ENCODE measurements at regions of chr16 and their contacts with region 1.

Region 1: DNA sequence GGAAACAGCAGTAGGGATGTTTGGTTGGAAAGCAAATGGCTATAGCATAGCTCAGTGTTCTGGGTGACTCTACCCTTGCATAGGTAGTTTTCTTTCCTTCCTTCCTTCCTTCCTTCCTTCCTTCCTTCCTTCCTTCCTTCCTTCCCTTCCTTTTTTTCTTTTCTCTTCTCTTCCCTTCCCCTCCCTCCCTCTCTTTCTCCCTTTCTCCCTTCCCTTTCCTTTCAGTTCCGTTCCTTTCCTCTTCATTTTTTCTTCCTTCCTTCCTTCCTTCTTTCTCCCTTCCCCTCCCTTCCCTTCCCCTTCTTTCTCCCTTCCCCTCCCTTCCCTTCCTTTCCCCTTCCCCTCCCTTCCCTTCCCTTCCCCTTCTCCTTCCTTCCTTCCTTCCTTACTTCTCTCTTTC is 31.3 kb downstream of the GDE1 start:
- DNase-seq: no peak
- ATAC-seq: no peak
- H3K4me3 ChIP-seq: no peak overlapping the region
- H3K27ac ChIP-seq: no peak overlapping the region
- H3K4me1 ChIP-seq: no peaks in the 10 kb centered on the region
- H3K27me3 ChIP-seq: no peaks in the 10 kb centered on the region
- CTCF ChIP-seq: no peak

Region 2: DNA sequence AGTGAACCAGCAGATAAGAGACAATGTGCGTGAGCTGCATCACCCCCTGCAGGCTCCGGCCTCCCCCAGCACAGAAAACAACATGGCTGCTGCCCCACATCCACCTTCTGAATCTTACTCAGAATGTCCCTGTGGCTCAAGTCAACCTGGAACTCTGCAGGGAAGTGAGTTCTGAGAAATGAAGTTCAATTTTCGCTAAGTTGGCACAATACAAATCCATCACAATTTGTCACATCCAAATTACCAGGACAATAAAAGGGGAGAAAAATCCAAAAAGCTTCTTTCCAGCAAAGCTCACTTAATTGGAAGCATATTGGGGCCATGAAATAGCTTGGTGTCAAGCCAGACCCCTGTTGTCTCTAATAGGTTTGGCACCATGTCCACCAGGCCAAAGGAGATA is 167.0 kb before region 1 on chr16:
- intact Hi-C with region 1: no loop called
- DNase-seq: no peak
- ATAC-seq: no peak
- H3K4me3 ChIP-seq: no peak overlapping the region
- H3K27ac ChIP-seq: no peak overlapping the region
- H3K4me1 ChIP-seq: no peaks in the 10 kb centered on the region
- H3K27me3 ChIP-seq: no peaks in the 10 kb centered on the region
- CTCF ChIP-seq: no peak

Region 3: GRCh38 chr16:19400697-19401096 is 89.9 kb before region 1 on chr16:
- intact Hi-C with region 1: loop called in 1 of 3 experiments (anchors 5 kb)
- DNase-seq: no peak
- ATAC-seq: no peak
- H3K4me3 ChIP-seq: no peak overlapping the region
- H3K27ac ChIP-seq: no peak overlapping the region
- H3K4me1 ChIP-seq: peaks cover 0 to 12% (median 0%) of the 10 kb centered on the region in 3 donors
- H3K27me3 ChIP-seq: no peaks in the 10 kb centered on the region
- CTCF ChIP-seq: no peak

Region 4: GRCh38 chr16:19524616-19525384 is 34.2 kb after region 1 on chr16:
- intact Hi-C with region 1: no loop called
- DNase-seq: no peak
- ATAC-seq: no peak
- H3K4me3 ChIP-seq: peak overlapping the region; percentile 87 to 93 (median 90)
- H3K27ac ChIP-seq: peak overlapping the region in 1 of 4 donors; percentile 24
- H3K4me1 ChIP-seq: peaks cover 8 to 12% (median 11%) of the 10 kb centered on the region in 3 donors
- H3K27me3 ChIP-seq: no peaks in the 10 kb centered on the region
- CTCF ChIP-seq: no peak

Region 5: GRCh38 chr16:19542138-19542821 is 51.7 kb after region 1 on chr16:
- intact Hi-C with region 1: no loop called
- DNase-seq: peak in 1 of 6 donors; percentile 35
- ATAC-seq: peak; percentile 35 to 87 (median 80)
- H3K4me3 ChIP-seq: no peak overlapping the region
- H3K27ac ChIP-seq: no peak overlapping the region
- H3K4me1 ChIP-seq: peaks cover 0 to 11% (median 9%) of the 10 kb centered on the region in 3 donors
- H3K27me3 ChIP-seq: no peaks in the 10 kb centered on the region
- CTCF ChIP-seq: no peak

Region 6: DNA sequence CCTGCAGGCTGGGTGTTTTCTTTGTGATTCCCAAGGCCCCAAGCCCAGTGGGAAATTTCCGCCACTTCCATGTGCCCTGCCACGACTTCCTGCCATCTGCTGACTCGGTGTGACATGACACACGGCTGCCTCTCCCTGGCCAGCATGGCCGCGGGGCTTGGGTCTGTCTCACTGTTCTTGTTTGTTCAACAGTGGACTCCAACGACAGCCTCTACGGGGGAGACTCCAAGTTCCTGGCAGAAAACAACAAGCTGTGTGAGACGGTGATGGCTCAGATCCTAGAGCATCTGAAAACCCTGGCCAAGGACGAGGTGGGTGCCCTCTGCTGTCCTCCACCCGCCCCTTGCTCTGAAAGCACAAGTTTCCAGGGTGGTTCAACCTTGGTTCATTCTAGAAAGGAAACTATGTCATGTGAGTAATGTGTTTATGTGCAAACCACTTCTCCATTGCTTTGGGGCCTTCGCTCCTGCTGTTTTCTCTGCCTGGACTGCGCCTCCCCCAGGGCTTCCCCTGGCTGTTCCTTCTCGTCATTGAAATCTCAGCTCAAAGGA is 200.6 kb after region 1 on chr16:
- intact Hi-C with region 1: no loop called
- DNase-seq: peak in 1 of 6 donors; percentile 18
- ATAC-seq: peak in 2 of 4 donors; percentile 28 to 32
- H3K4me3 ChIP-seq: no peak overlapping the region
- H3K27ac ChIP-seq: no peak overlapping the region
- H3K4me1 ChIP-seq: peaks cover 0 to 7% (median 3%) of the 10 kb centered on the region in 3 donors
- H3K27me3 ChIP-seq: no peaks in the 10 kb centered on the region
- CTCF ChIP-seq: no peak

Measured in pancreas (tissue), 10 donors.